CD4-positive, alpha-beta memory T cell (primary cell): ENCODE measurements at regions of chr14 and their contacts with region 1.

Region 1: DNA sequence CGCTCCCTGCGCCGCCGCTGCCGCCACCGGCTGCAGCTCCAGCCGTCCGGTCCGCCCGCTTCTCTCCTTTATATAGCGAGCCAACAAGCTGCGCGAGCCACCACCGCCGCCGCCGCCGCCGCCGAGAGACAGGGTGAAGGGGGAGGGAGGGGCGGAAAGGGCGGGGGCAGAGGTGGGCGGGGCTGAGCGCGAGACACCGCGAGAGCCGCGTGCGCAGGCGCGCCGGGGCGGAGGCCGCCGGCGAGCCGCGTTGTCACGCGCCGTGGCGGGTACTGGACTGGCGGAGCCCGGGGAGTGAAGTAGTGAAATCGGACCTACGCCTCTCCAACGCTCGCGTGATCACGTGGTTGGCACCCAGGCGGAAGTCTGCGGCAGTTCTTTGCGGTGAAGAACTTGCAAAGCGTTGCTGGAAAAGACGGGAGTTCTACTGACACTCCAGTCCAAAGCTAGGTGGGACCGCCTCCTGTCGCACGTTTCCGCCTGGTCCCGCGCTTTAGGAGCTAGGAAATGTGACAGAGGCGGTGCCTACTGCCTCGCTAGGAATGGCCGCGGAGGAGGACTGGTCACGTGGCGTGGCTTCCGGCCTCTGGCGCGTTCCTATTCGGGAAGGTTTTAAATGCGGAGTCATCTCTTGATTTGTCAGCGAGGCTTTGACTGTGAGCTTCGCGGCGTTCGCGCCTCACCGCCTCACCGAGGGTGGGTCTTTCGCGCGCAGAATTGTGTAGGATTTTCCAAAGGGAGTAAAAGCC is at the start of gene GTF2A1:
- DNase-seq: peak; percentile 96 to 97 (median 96)
- H3K4me3 ChIP-seq: peak within 1 kb of the TSS; percentile 92 to 99
- H3K4me3 Mint-ChIP-seq: peak within 1 kb of the TSS; percentile 98 to 100 (median 100)
- H3K27ac ChIP-seq: peak within 1 kb of the TSS; percentile 95
- H3K27ac Mint-ChIP-seq: peak within 1 kb of the TSS; percentile 99 to 100 (median 99)
- H3K4me1 ChIP-seq: peaks cover 35% of the 10 kb centered on the region
- H3K4me1 Mint-ChIP-seq: peaks cover 17 to 49% (median 31%) of the 10 kb centered on the region in 4 donors
- H3K27me3 ChIP-seq: no peaks in the 10 kb centered on the region
- H3K27me3 Mint-ChIP-seq: no peaks in the 10 kb centered on the region
- total RNA-seq, gene GTF2A1: 34.2 to 40.8 TPM

Region 2: GRCh38 chr14:79802093-79802492 is 1418.9 kb before region 1 on chr14:
- CTCF ChIA-PET with region 1: no interaction called
- POLR2A ChIA-PET with region 1: no interaction called
- intact Hi-C with region 1: no loop called
- DNase-seq: no peak
- H3K4me3 ChIP-seq: no peak overlapping the region
- H3K4me3 Mint-ChIP-seq: no peak overlapping the region
- H3K27ac ChIP-seq: no peak overlapping the region
- H3K27ac Mint-ChIP-seq: no peak overlapping the region
- H3K4me1 ChIP-seq: no peaks in the 10 kb centered on the region
- H3K4me1 Mint-ChIP-seq: no peaks in the 10 kb centered on the region
- H3K27me3 ChIP-seq: no peaks in the 10 kb centered on the region
- H3K27me3 Mint-ChIP-seq: no peaks in the 10 kb centered on the region

Region 3: GRCh38 chr14:80930836-80931389 is 290.1 kb before region 1 on chr14:
- CTCF ChIA-PET with region 1: no interaction called
- POLR2A ChIA-PET with region 1: interaction called, 18 read pairs
- intact Hi-C with region 1: no loop called
- DNase-seq: peak; percentile 78 to 89 (median 85)
- H3K4me3 ChIP-seq: no peak overlapping the region
- H3K4me3 Mint-ChIP-seq: peak overlapping the region; percentile 57 to 82 (median 68)
- H3K27ac ChIP-seq: peak overlapping the region; percentile 38
- H3K27ac Mint-ChIP-seq: peak overlapping the region; percentile 82 to 96 (median 93)
- H3K4me1 ChIP-seq: peaks cover 31% of the 10 kb centered on the region
- H3K4me1 Mint-ChIP-seq: peaks cover 39 to 62% (median 45%) of the 10 kb centered on the region in 4 donors
- H3K27me3 ChIP-seq: no peaks in the 10 kb centered on the region
- H3K27me3 Mint-ChIP-seq: no peaks in the 10 kb centered on the region

Region 4: GRCh38 chr14:80954687-80955299 is 266.2 kb before region 1 on chr14:
- CTCF ChIA-PET with region 1: interaction called, 6 read pairs
- POLR2A ChIA-PET with region 1: interaction called, 12 read pairs
- intact Hi-C with region 1: loop called (anchors 2 kb)
- DNase-seq: peak; percentile 65 to 77 (median 72)
- H3K4me3 ChIP-seq: peak overlapping the region; percentile 72 to 92
- H3K4me3 Mint-ChIP-seq: peak overlapping the region; percentile 77 to 96 (median 88)
- H3K27ac ChIP-seq: no peak overlapping the region
- H3K27ac Mint-ChIP-seq: peak overlapping the region; percentile 12 to 72 (median 60)
- H3K4me1 ChIP-seq: peaks cover 35% of the 10 kb centered on the region
- H3K4me1 Mint-ChIP-seq: peaks cover 27 to 41% (median 33%) of the 10 kb centered on the region in 4 donors
- H3K27me3 ChIP-seq: no peaks in the 10 kb centered on the region
- H3K27me3 Mint-ChIP-seq: no peaks in the 10 kb centered on the region

Region 5: GRCh38 chr14:81178063-81178462 is 42.9 kb before region 1 on chr14:
- CTCF ChIA-PET with region 1: no interaction called
- POLR2A ChIA-PET with region 1: interaction called, 12 read pairs
- intact Hi-C with region 1: no loop called
- DNase-seq: no peak
- H3K4me3 ChIP-seq: no peak overlapping the region
- H3K4me3 Mint-ChIP-seq: peak overlapping the region in 1 of 8 donors; percentile 69
- H3K27ac ChIP-seq: peak overlapping the region; percentile 41
- H3K27ac Mint-ChIP-seq: peak overlapping the region in 4 of 7 donors; percentile 23 to 76 (median 47)
- H3K4me1 ChIP-seq: peaks cover 19% of the 10 kb centered on the region
- H3K4me1 Mint-ChIP-seq: peaks cover 11 to 35% (median 26%) of the 10 kb centered on the region in 4 donors
- H3K27me3 ChIP-seq: no peaks in the 10 kb centered on the region
- H3K27me3 Mint-ChIP-seq: no peaks in the 10 kb centered on the region

Region 6: GRCh38 chr14:81200054-81200453 is 20.9 kb before region 1 on chr14:
- CTCF ChIA-PET with region 1: interaction called, 7 read pairs
- POLR2A ChIA-PET with region 1: interaction called, 8 read pairs
- intact Hi-C with region 1: loop called (anchors 1 kb)
- DNase-seq: peak in 4 of 5 donors; percentile 12 to 19 (median 14)
- H3K4me3 ChIP-seq: no peak overlapping the region
- H3K4me3 Mint-ChIP-seq: peak overlapping the region in 6 of 8 donors; percentile 9 to 65 (median 48)
- H3K27ac ChIP-seq: no peak overlapping the region
- H3K27ac Mint-ChIP-seq: peak overlapping the region; percentile 82 to 89 (median 86)
- H3K4me1 ChIP-seq: peaks cover 14% of the 10 kb centered on the region
- H3K4me1 Mint-ChIP-seq: peaks cover 18 to 38% (median 23%) of the 10 kb centered on the region in 4 donors
- H3K27me3 ChIP-seq: no peaks in the 10 kb centered on the region
- H3K27me3 Mint-ChIP-seq: no peaks in the 10 kb centered on the region

Region 7: GRCh38 chr14:81303248-81304221 is 82.5 kb after region 1 on chr14:
- CTCF ChIA-PET with region 1: no interaction called
- POLR2A ChIA-PET with region 1: no interaction called
- intact Hi-C with region 1: no loop called
- DNase-seq: no peak
- H3K4me3 ChIP-seq: no peak overlapping the region
- H3K4me3 Mint-ChIP-seq: no peak overlapping the region
- H3K27ac ChIP-seq: no peak overlapping the region
- H3K27ac Mint-ChIP-seq: no peak overlapping the region
- H3K4me1 ChIP-seq: no peaks in the 10 kb centered on the region
- H3K4me1 Mint-ChIP-seq: peaks cover 0 to 4% (median 0%) of the 10 kb centered on the region in 4 donors
- H3K27me3 ChIP-seq: no peaks in the 10 kb centered on the region
- H3K27me3 Mint-ChIP-seq: no peaks in the 10 kb centered on the region

Region 8: DNA sequence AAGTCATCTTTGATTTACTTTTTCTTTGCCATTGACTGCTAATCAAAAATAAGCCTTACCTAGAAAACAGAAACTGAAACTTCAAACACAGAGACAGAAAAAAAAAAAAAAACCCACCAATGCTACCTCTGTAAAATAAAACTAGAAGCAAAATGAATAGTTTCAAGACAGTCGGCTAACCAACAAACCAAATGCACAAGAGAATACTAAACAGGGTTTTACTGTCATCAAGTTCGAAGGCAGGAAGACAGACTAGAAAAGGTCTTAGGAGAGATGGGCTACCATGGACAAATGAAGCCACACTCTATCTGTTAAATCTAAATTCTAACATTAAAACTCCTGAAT is 253.1 kb after region 1 on chr14:
- CTCF ChIA-PET with region 1: no interaction called
- POLR2A ChIA-PET with region 1: no interaction called
- intact Hi-C with region 1: loop called (anchors 5 kb)
- DNase-seq: peak in 4 of 5 donors; percentile 16 to 29 (median 19)
- H3K4me3 ChIP-seq: peak overlapping the region; percentile 2 to 39
- H3K4me3 Mint-ChIP-seq: peak overlapping the region; percentile 79 to 88 (median 83)
- H3K27ac ChIP-seq: peak overlapping the region; percentile 56
- H3K27ac Mint-ChIP-seq: peak overlapping the region; percentile 74 to 97 (median 94)
- H3K4me1 ChIP-seq: peaks cover 16% of the 10 kb centered on the region
- H3K4me1 Mint-ChIP-seq: peaks cover 21 to 33% (median 27%) of the 10 kb centered on the region in 4 donors
- H3K27me3 ChIP-seq: no peaks in the 10 kb centered on the region
- H3K27me3 Mint-ChIP-seq: no peaks in the 10 kb centered on the region